Heart left ventricle (tissue), 16 donors: ENCODE measurements at regions of chr6 and their contacts with region 1.

Region 1: GRCh38 chr6:53734473-53735299 is 60.1 kb upstream of the LRRC1 start:
- DNase-seq: peak in 3 of 5 donors; percentile 31 to 38 (median 37)
- ATAC-seq: peak in 3 of 4 donors; percentile 69 to 75 (median 70)
- H3K4me3 ChIP-seq: no peak overlapping the region
- H3K27ac ChIP-seq: no peak overlapping the region
- H3K4me1 ChIP-seq: peaks cover 0 to 4% (median 0%) of the 10 kb centered on the region in 12 donors
- H3K27me3 ChIP-seq: no peaks in the 10 kb centered on the region
- CTCF ChIP-seq: peak in 7 of 12 donors; percentile 7 to 48 (median 26)
- POLR2A ChIP-seq: no peak

Region 2: DNA sequence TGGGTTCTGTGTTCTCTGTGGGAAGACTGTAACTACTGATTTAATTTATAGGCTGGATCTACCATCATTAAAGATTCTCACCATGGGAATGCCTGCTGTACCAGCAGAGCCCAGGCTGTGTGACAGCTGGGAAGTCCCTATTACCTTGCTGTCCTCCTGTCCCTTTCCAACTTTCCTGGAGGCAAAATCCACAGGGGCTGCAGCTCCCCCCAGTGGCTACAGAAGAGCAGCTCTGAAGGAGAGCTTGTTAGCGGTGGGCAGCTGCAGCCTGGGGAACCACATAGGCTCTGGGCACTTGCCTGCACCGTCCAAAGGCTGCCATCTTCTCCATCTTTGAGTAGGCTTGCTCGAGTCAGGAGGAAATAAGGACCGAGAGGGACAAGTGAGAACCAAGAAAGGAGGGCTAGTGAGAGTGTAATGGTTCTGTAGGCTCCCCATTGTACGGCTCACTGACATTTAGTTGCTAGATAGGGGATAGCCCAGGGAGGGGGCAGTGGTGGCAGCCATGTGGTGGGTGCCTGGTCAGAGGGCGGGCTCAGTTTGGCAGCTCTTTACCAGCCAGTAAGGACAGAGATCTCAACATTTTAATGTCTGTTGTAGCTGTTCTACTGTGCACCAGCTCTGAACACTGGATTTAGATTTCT is 221.5 kb after region 1 on chr6:
- intact Hi-C with region 1: loop called in 7 of 10 experiments (anchors 2 to 10 kb)
- DNase-seq: peak; percentile 59 to 75 (median 70)
- ATAC-seq: peak; percentile 93 to 97 (median 96)
- H3K4me3 ChIP-seq: no peak overlapping the region
- H3K27ac ChIP-seq: no peak overlapping the region
- H3K4me1 ChIP-seq: no peaks in the 10 kb centered on the region
- H3K27me3 ChIP-seq: no peaks in the 10 kb centered on the region
- CTCF ChIP-seq: peak; percentile 38 to 81 (median 66)
- POLR2A ChIP-seq: no peak

Region 3: GRCh38 chr6:54074578-54075195 is 340.0 kb after region 1 on chr6:
- intact Hi-C with region 1: no loop called
- DNase-seq: peak; percentile 21 to 52 (median 34)
- ATAC-seq: peak; percentile 33 to 72 (median 55)
- H3K4me3 ChIP-seq: no peak overlapping the region
- H3K27ac ChIP-seq: peak overlapping the region in 4 of 12 donors; percentile 9 to 31 (median 22)
- H3K4me1 ChIP-seq: peaks cover 0 to 80% (median 40%) of the 10 kb centered on the region in 12 donors
- H3K27me3 ChIP-seq: no peaks in the 10 kb centered on the region
- CTCF ChIP-seq: no peak
- POLR2A ChIP-seq: no peak